ENCODE measurements at regions of chr14 and their contacts with region 1.

Region 1: DNA sequence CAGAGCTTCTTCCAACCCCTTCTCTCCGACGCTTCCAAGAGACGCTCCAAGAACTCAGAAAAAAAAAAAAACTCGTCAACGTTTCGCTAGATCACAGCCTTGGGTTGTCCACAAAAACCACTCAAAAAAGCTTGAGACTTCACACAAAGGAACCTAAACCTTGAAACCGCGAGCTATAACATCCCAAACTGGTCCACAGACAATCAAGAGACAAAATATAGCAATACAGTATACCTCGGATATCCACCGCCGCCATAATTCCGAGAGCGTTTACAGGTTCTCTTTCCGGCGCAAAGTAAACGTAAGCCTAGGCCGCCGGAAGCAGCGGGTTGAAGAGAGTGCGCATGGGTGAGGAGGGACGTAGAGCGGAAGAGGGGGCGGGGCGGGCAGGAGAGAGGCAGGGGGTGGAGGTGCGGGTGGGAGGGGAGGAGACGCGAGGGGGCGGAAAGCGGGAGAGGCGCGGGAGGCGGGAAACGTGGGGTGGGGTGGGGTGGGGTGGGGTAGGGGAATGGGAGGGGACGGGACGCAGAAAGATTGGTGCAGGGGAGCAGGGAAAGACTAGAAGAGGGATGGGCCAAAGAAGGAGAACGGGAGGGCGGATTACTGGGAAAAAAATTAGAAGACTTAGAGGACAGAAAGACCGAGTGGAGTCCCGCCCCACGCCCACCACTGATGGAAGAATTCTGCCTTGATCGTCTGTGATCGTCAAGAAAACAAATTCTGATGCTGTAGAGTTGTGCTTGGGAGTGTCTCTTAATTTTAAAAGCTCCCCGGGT is at the start of gene MED6:
- DNase-seq: peak; percentile 69
- ATAC-seq: peak; percentile 97
- H3K4me3 ChIP-seq: peak within 1 kb of the TSS; percentile 90
- H3K27ac ChIP-seq: peak within 1 kb of the TSS; percentile 83
- H3K4me1 ChIP-seq: peaks cover 16% of the 10 kb centered on the region
- H3K27me3 ChIP-seq: no peaks in the 10 kb centered on the region
- CTCF ChIP-seq: no peak
- EP300 ChIP-seq: no peak
- POLR2A ChIP-seq: peak; percentile 81
- RAD21 ChIP-seq: no peak
- polyA plus RNA-seq, gene MED6: 36.6 to 40.0 TPM

Region 2: GRCh38 chr14:70555890-70556289 is 44.7 kb before region 1 on chr14:
- CTCF ChIA-PET with region 1: no interaction called
- POLR2A ChIA-PET with region 1: no interaction called
- RAD21 ChIA-PET with region 1: no interaction called
- SMC1A ChIA-PET with region 1: no interaction called
- in situ Hi-C with region 1: no loop called
- intact Hi-C with region 1: no loop called
- DNase-seq: no peak
- ATAC-seq: no peak
- H3K4me3 ChIP-seq: no peak overlapping the region
- H3K27ac ChIP-seq: no peak overlapping the region
- H3K4me1 ChIP-seq: no peaks in the 10 kb centered on the region
- H3K27me3 ChIP-seq: no peaks in the 10 kb centered on the region
- CTCF ChIP-seq: no peak
- EP300 ChIP-seq: no peak
- POLR2A ChIP-seq: no peak
- RAD21 ChIP-seq: no peak

Region 3: DNA sequence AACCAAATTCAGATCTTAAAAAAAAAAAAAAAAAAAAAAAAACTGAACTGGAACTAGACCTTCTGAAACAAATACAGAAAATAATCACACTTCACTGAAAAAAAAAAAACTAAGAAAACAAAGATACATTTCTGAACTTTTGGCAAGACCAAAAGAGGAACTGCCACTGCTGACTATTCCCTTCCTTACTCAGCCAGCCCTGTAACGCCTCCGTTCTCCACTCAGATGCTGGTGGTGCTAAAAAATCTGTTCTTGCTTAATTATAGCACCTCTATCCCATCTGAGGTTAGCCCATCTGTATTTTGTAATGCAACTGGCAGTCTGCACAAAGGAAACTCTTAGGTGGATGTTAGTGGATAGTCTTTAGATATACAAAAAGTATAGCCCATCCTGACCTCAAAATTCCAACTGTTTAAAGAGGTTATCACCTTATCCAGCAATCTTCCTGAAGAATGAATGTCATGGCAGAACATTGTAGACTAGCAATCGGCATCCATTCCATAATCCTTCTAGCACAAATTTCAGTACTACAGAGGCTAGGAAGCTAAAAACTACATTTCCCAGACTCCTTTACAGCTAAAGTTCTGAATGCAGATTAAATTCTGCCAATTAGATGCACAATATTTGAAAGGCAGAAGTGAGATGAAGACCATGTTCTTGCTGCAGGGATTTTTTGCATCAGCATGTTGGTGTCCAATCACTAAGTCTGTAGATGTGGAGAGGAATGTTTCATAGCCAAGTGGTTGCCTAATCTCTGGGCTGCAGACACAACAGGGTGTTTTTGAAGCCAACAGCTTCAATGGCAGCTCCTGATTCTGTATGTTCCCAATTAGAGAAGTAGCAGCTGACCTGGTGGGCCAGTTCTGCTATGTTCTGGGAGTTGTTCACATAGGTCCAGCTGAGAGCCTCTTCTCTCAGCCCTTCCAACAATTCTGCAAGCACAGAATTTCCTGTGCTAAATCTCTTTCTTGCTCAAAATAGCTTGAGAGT is 203.0 kb after region 1 on chr14:
- CTCF ChIA-PET with region 1: no interaction called
- POLR2A ChIA-PET with region 1: no interaction called
- RAD21 ChIA-PET with region 1: interaction called, 3 read pairs
- SMC1A ChIA-PET with region 1: no interaction called
- in situ Hi-C with region 1: no loop called
- intact Hi-C with region 1: loop called (anchors 5 kb)
- DNase-seq: peak; percentile 66
- ATAC-seq: peak; percentile 96
- H3K4me3 ChIP-seq: peak overlapping the region; percentile 19; the same call in 1 of the 2 replicates
- H3K27ac ChIP-seq: no peak overlapping the region; the same call in 1 of the 2 replicates
- H3K4me1 ChIP-seq: peaks cover 38% of the 10 kb centered on the region
- H3K27me3 ChIP-seq: no peaks in the 10 kb centered on the region
- CTCF ChIP-seq: peak in 2 of 3 experiments; percentile 6 to 23; a peak in 2 of 6 replicates
- EP300 ChIP-seq: peak; percentile 35 to 86; a peak in 3 of 4 replicates
- POLR2A ChIP-seq: no peak
- RAD21 ChIP-seq: no peak